ENCODE measurements at regions of chrX and their contacts with region 1.

Region 1: GRCh38 chrX:19904778-19905367 is 17.5 kb upstream of the SH3KBP1 start:
- DNase-seq: no peak
- H3K4me3 ChIP-seq: no peak overlapping the region
- H3K27ac ChIP-seq: no peak overlapping the region
- H3K4me1 ChIP-seq: no peaks in the 10 kb centered on the region
- H3K27me3 ChIP-seq: no peaks in the 10 kb centered on the region
- CTCF ChIP-seq: peak; percentile 74

Region 2: GRCh38 chrX:19990556-19991349 is 85.9 kb after region 1 on chrX and contains the start of gene BCLAF3:
- intact Hi-C with region 1: loop called (anchors 5 kb)
- DNase-seq: peak; percentile 88
- H3K4me3 ChIP-seq: peak within 1 kb of the TSS; percentile 65
- H3K27ac ChIP-seq: peak within 1 kb of the TSS; percentile 69
- H3K4me1 ChIP-seq: no peaks in the 10 kb centered on the region
- H3K27me3 ChIP-seq: no peaks in the 10 kb centered on the region
- CTCF ChIP-seq: peak; percentile 66
- total RNA-seq, gene BCLAF3: 11.0 to 14.9 TPM

Region 3: GRCh38 chrX:20056704-20057103 is 151.8 kb after region 1 on chrX:
- intact Hi-C with region 1: no loop called
- DNase-seq: no peak
- H3K4me3 ChIP-seq: no peak overlapping the region
- H3K27ac ChIP-seq: no peak overlapping the region
- H3K4me1 ChIP-seq: no peaks in the 10 kb centered on the region
- H3K27me3 ChIP-seq: peaks cover 4% of the 10 kb centered on the region
- CTCF ChIP-seq: no peak

Region 4: GRCh38 chrX:20066968-20067708 is 162.3 kb after region 1 on chrX:
- intact Hi-C with region 1: loop called (anchors 5 kb)
- DNase-seq: peak; percentile 31
- H3K4me3 ChIP-seq: no peak overlapping the region
- H3K27ac ChIP-seq: no peak overlapping the region
- H3K4me1 ChIP-seq: no peaks in the 10 kb centered on the region
- H3K27me3 ChIP-seq: no peaks in the 10 kb centered on the region
- CTCF ChIP-seq: peak; percentile 47

Region 5: DNA sequence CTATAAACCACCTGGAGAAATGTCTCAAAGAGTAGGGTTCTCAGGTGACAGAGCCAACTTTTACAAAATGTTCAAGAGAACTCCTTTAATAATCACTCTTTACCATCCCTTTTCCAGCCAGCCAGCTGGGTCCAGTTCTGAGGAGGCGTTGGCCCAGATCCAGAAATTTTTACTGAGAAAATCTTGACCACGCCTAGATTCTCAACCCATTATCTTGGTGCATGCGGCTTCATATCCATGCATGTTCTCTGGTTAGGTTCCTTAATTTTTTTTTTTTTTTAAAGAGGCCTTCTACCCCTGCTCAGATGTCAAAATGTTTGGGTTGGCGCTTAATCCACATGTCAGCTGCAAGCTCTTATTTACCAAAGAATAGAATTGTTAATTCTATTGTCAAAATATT is 223.8 kb after region 1 on chrX:
- intact Hi-C with region 1: loop called (anchors 10 kb)
- DNase-seq: no peak
- H3K4me3 ChIP-seq: no peak overlapping the region
- H3K27ac ChIP-seq: no peak overlapping the region
- H3K4me1 ChIP-seq: no peaks in the 10 kb centered on the region
- H3K27me3 ChIP-seq: no peaks in the 10 kb centered on the region
- CTCF ChIP-seq: no peak

Region 6: GRCh38 chrX:20427173-20427770 is 522.4 kb after region 1 on chrX:
- intact Hi-C with region 1: no loop called
- DNase-seq: no peak
- H3K4me3 ChIP-seq: no peak overlapping the region
- H3K27ac ChIP-seq: no peak overlapping the region
- H3K4me1 ChIP-seq: no peaks in the 10 kb centered on the region
- H3K27me3 ChIP-seq: no peaks in the 10 kb centered on the region
- CTCF ChIP-seq: no peak

Measured in colonic mucosa (tissue), 4 donors.